ENCODE measurements at regions of chr5 and their contacts with region 1.

Region 1: GRCh38 chr5:56415356-56415765 is 182.2 kb upstream of the ANKRD55 start:
- DNase-seq: peak in 3 of 4 experiments; percentile 12 to 75 (median 56)
- ATAC-seq: peak; percentile 97
- H3K4me3 ChIP-seq: no peak overlapping the region
- H3K27ac ChIP-seq: peak overlapping the region; percentile 57; the same call in 2 of the 3 replicates
- H3K4me1 ChIP-seq: peaks cover 0 to 15% of the 10 kb centered on the region in 2 experiments; a peak in 3 of 5 replicates
- H3K27me3 ChIP-seq: no peaks in the 10 kb centered on the region
- CTCF ChIP-seq: no peak
- EP300 ChIP-seq: peak; percentile 51
- POLR2A ChIP-seq: no peak
- RAD21 ChIP-seq: peak; percentile 33 to 41; a peak in 2 of 4 replicates

Region 2: GRCh38 chr5:56402266-56403220 is 12.8 kb before region 1 on chr5:
- CTCF ChIA-PET with region 1: no interaction called
- POLR2A ChIA-PET with region 1: interaction called, 12 read pairs
- in situ Hi-C with region 1: no loop called
- intact Hi-C with region 1: no loop called
- DNase-seq: no peak
- ATAC-seq: no peak
- H3K4me3 ChIP-seq: no peak overlapping the region
- H3K27ac ChIP-seq: no peak overlapping the region
- H3K4me1 ChIP-seq: peaks cover 0 to 13% of the 10 kb centered on the region in 2 experiments; a peak in 2 of 5 replicates
- H3K27me3 ChIP-seq: no peaks in the 10 kb centered on the region
- CTCF ChIP-seq: no peak
- EP300 ChIP-seq: no peak
- POLR2A ChIP-seq: no peak
- RAD21 ChIP-seq: no peak

Region 3: GRCh38 chr5:56494300-56494731 is 79.0 kb after region 1 on chr5:
- CTCF ChIA-PET with region 1: no interaction called
- POLR2A ChIA-PET with region 1: no interaction called
- in situ Hi-C with region 1: no loop called
- intact Hi-C with region 1: loop called (anchors 1 kb)
- DNase-seq: peak in 3 of 4 experiments; percentile 17 to 69 (median 44)
- ATAC-seq: peak; percentile 74
- H3K4me3 ChIP-seq: no peak overlapping the region
- H3K27ac ChIP-seq: peak overlapping the region; percentile 66
- H3K4me1 ChIP-seq: peaks cover 12 to 46% of the 10 kb centered on the region in 2 experiments
- H3K27me3 ChIP-seq: no peaks in the 10 kb centered on the region
- CTCF ChIP-seq: 0 out of 6 replicates have a peak, but pooled peaks of 1 of the 3 experiments have one; percentile 6
- EP300 ChIP-seq: peak; percentile 55
- POLR2A ChIP-seq: no peak
- RAD21 ChIP-seq: no peak

Region 4: DNA sequence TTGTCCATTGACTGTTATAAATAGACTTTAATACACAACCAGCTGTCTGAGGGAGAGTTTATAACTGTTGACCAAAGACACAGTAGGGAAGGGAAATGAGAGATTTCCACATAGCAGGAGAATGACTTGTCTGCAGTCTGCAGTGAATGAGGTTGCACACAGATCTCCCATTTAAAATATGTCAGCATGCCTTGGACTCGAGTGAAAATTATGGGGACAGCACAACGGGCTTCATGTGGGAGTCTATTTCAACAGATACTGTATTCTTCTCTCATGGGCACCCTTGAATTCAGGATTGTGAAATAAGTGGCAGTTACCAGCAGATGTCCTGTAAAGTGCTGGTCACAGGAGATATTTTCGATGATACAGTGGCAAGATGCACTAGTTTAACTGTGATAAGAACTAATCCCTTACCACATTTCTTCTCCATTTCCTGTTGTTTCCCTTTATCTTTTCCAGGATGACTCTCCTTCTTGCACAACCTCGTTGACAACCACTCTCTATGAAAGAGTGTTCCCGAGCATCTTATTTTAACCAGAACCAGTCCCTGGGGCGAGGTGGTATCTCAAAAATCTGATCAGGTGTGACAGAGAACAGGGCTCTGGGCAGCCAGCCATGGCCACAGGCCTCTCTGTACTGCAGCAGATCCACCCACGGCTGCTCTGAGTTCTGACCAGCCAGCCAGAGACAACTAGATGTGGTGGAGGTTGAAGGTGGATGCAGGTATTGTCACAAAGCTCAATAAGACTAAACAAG is 348.5 kb after region 1 on chr5:
- CTCF ChIA-PET with region 1: no interaction called
- POLR2A ChIA-PET with region 1: no interaction called
- in situ Hi-C with region 1: no loop called
- intact Hi-C with region 1: no loop called
- DNase-seq: peak in 2 of 4 experiments; percentile 32 to 64
- ATAC-seq: peak; percentile 79
- H3K4me3 ChIP-seq: no peak overlapping the region
- H3K27ac ChIP-seq: peak overlapping the region; percentile 50; the same call in 2 of the 3 replicates
- H3K4me1 ChIP-seq: peaks cover 6 to 22% of the 10 kb centered on the region in 2 experiments; a peak in 4 of 5 replicates
- H3K27me3 ChIP-seq: no peaks in the 10 kb centered on the region
- CTCF ChIP-seq: no peak
- EP300 ChIP-seq: peak; percentile 92
- POLR2A ChIP-seq: no peak
- RAD21 ChIP-seq: peak; percentile 7 to 13; a peak in 1 of 4 replicates

Region 5: DNA sequence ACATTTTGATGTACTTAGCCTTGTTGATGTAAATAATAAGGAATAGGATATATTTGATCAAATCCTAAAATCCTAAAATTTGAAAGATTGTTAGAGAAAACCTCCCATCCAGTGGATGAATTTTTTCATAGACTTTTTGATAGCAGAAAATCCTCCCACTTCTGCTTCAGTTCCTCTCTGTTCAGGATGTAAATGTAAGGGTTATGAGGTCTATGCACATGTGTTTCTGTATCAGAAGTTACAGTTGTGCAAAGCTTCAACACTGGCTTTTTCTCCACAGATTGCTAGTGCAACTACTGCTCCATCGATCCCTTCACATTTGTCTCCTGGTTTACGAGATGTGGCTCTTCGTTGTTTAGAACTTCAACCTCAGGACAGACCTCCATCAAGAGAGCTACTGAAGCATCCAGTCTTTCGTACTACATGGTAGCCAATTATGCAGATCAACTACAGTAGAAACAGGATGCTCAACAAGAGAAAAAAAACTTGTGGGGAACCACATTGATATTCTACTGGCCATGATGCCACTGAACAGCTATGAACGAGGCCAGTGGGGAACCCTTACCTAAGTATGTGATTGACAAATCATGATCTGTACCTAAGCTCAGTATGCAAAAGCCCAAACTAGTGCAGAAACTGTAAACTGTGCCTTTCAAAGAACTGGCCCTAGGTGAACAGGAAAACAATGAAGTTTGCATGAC is 478.0 kb after region 1 on chr5:
- CTCF ChIA-PET with region 1: no interaction called
- POLR2A ChIA-PET with region 1: no interaction called
- in situ Hi-C with region 1: no loop called
- intact Hi-C with region 1: no loop called
- DNase-seq: no peak
- ATAC-seq: no peak
- H3K4me3 ChIP-seq: no peak overlapping the region
- H3K27ac ChIP-seq: no peak overlapping the region
- H3K4me1 ChIP-seq: no peaks in the 10 kb centered on the region
- H3K27me3 ChIP-seq: no peaks in the 10 kb centered on the region
- CTCF ChIP-seq: no peak
- EP300 ChIP-seq: no peak
- POLR2A ChIP-seq: no peak
- RAD21 ChIP-seq: no peak

Region 6: GRCh38 chr5:57094753-57095683 is 679.7 kb after region 1 on chr5:
- CTCF ChIA-PET with region 1: no interaction called
- POLR2A ChIA-PET with region 1: no interaction called
- in situ Hi-C with region 1: no loop called
- intact Hi-C with region 1: no loop called
- DNase-seq: peak in 1 of 4 experiments; percentile 42
- ATAC-seq: peak; percentile 69
- H3K4me3 ChIP-seq: no peak overlapping the region
- H3K27ac ChIP-seq: no peak overlapping the region
- H3K4me1 ChIP-seq: no peaks in the 10 kb centered on the region; a peak in 1 of 5 replicates
- H3K27me3 ChIP-seq: no peaks in the 10 kb centered on the region
- CTCF ChIP-seq: peak; percentile 48 to 63 (median 49)
- EP300 ChIP-seq: no peak
- POLR2A ChIP-seq: no peak
- RAD21 ChIP-seq: peak; percentile 23 to 53; a peak in 2 of 4 replicates

Measured in K562 (cell line).